CD4-positive, alpha-beta T cell (primary cell): ENCODE measurements at regions of chr20 and their contacts with region 1.

Region 1: DNA sequence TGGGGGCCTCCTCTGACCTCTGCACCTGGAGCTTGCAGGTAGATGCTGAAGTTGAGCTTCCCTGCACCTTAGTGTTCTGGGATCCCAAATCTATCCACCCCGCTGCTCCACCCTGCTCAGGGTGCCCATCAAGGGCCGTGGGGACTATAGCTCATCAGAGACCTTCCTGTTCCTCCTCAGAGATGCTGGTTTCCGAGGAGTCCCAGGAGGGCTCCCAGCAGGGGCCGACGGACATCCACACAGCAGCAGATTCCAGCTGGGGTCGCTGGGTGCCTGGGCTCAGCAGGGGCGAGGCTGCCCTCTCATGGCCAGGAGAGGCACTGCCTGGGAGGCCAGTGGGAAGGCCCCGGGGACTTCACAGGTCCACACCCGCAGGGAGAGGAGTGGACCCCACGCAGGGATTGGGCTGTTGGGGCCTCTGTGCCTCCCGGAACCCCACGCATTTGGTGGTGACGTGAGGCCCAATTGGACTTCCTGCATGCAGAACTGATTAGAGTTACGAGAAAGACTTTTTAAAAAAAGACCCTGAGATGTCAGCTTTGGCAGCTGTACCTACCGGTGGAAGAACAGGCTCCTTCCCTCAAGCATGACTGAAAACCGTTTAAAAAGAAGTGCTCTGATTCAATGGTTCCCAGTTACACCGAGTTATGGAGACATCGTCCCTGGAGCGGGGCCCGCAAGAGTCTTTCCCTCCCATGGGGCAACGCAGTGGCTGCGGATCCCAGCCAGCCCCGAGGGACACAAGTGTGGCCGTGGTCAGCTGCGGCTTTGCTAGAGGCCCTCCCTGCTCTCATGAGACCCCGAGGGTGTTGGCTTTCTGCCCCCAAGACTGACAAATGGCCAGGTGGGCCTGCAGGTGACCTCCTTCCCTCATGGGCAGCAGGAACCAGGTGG is 25.3 kb upstream of the SLCO4A1 start:
- DNase-seq: peak; percentile 44 to 82 (median 58)
- ATAC-seq: peak; percentile 88
- H3K4me3 ChIP-seq: no peak overlapping the region
- H3K4me3 Mint-ChIP-seq: peak overlapping the region; percentile 42
- H3K27ac ChIP-seq: no peak overlapping the region
- H3K27ac Mint-ChIP-seq: peak overlapping the region; percentile 44
- H3K4me1 ChIP-seq: peaks cover 27% of the 10 kb centered on the region
- H3K4me1 Mint-ChIP-seq: peaks cover 15% of the 10 kb centered on the region
- H3K27me3 ChIP-seq: no peaks in the 10 kb centered on the region
- H3K27me3 Mint-ChIP-seq: no peaks in the 10 kb centered on the region
- CTCF ChIP-seq: peak; percentile 82

Region 2: GRCh38 chr20:62603021-62603906 is 13.7 kb before region 1 on chr20:
- CTCF ChIA-PET with region 1: interaction called, 13 read pairs
- POLR2A ChIA-PET with region 1: no interaction called
- intact Hi-C with region 1: no loop called
- DNase-seq: peak in 7 of 14 experiments; percentile 17 to 78 (median 39)
- ATAC-seq: peak; percentile 70
- H3K4me3 ChIP-seq: peak overlapping the region; percentile 36
- H3K4me3 Mint-ChIP-seq: peak overlapping the region; percentile 86
- H3K27ac ChIP-seq: no peak overlapping the region
- H3K27ac Mint-ChIP-seq: peak overlapping the region; percentile 34
- H3K4me1 ChIP-seq: peaks cover 34% of the 10 kb centered on the region
- H3K4me1 Mint-ChIP-seq: peaks cover 17% of the 10 kb centered on the region
- H3K27me3 ChIP-seq: peaks cover 2 to 5% of the 10 kb centered on the region in 2 experiments
- H3K27me3 Mint-ChIP-seq: peaks cover 20% of the 10 kb centered on the region
- CTCF ChIP-seq: no peak

Region 3: DNA sequence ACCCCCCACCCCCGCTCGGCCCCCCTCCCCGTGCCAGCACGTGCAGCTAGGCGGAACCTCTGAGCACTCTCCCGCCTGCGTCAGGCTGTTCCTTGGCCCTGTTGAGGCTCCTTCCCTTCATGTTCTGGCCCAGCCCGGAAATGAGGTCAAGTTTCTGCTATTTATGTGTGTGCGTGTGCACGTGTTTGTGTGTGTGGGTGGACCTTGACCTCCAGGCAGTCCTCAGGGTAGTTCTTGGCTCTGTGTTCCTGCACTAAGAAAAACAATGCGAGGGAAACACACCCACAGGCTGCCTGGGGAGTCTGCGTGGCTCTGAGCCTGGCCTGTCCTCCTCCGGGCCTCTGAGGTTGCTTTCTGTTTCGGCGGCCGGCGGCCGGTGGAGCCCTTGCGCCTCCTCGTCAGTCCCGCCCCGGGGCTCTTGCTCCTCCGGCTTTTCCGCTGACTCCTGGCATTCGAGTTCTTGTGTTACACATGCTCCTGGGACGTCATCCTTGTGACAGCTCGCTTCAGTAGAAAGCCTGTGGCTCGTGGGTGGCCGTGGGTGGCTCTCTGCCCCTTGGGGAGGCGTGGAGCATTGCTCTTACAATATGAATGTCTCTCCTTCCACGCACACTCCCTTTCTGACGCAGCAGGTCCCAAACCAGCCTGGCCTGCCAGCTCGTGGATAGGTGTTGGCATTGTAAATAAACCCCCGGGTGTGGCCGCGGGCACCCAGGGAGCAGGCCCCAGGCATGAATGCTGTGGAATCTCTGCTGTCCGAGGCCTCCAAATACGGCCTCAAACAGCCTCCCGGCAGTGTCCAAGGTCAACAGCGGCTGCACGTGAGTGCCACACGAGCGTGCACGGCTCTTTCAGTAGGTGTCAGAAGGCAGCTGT is 35.3 kb after region 1 on chr20:
- CTCF ChIA-PET with region 1: interaction called, 14 read pairs
- POLR2A ChIA-PET with region 1: interaction called, 8 read pairs
- intact Hi-C with region 1: no loop called
- DNase-seq: peak; percentile 48 to 90 (median 64)
- ATAC-seq: peak; percentile 64
- H3K4me3 ChIP-seq: peak overlapping the region; percentile 56
- H3K4me3 Mint-ChIP-seq: peak overlapping the region; percentile 93
- H3K27ac ChIP-seq: peak overlapping the region; percentile 70 to 89
- H3K27ac Mint-ChIP-seq: peak overlapping the region; percentile 91
- H3K4me1 ChIP-seq: peaks cover 38% of the 10 kb centered on the region
- H3K4me1 Mint-ChIP-seq: peaks cover 30% of the 10 kb centered on the region
- H3K27me3 ChIP-seq: no peaks in the 10 kb centered on the region
- H3K27me3 Mint-ChIP-seq: no peaks in the 10 kb centered on the region
- CTCF ChIP-seq: no peak